OCI-LY7 (cell line): ENCODE measurements at regions of chr22 and their contacts with region 1.

Region 1: DNA sequence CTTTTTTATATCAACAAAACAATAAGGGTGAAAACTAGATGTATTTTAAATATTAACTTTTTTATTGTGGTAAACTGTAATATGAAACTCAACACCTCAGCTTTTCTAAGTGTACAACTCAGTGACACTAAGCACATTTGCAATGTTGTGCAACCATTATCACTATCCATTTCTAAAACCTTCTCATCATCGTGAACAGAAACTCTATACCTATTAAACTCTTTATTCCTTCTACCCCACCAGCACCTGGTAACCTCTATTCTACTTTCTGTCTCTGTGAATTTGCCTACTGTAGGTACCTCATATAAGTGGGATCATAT is 9.4 kb downstream of the HORMAD2 start:
- DNase-seq: no peak
- H3K4me3 ChIP-seq: no peak overlapping the region
- H3K27ac ChIP-seq: no peak overlapping the region
- H3K4me1 ChIP-seq: no peaks in the 10 kb centered on the region
- CTCF ChIP-seq: no peak

Region 2: DNA sequence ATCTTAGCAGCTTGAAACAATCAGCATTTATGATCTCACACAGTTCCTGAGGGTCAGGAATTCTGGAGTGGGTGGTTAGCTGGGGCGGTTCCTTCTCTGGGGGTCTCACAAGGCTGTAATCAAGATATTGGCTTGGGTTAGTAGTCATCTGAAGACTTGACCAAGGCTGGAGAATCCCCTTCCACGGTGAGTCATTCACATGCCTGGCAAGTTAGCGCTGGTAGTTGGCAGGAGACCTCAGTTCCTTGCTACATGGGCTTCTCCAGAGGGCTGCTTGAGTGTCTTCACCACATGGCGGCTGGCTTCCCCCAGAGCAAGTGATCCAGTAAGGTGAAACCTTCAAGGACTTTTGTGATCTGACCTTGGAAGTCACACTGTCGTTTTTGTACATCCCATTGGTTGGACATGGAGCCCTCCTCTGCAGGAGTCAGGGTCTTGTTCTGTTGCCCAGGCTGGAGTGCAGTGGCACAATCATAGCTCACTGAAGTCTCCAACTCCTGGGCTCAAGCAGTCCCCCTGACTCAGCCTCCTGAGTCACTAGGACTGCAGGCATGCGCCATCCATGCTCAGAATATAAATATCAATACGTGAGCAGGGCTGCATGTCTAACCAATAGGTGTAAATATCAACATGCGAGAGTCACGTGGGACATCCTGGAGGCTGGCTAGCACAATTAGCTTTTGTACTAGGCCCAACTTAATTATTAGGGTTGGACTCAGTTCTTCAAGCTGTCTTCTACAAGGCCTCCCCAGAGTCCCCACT is 501.5 kb before region 1 on chr22:
- CTCF ChIA-PET with region 1: no interaction called
- POLR2A ChIA-PET with region 1: no interaction called
- intact Hi-C with region 1: loop called (anchors 2 kb)
- DNase-seq: no peak
- H3K4me3 ChIP-seq: no peak overlapping the region
- H3K27ac ChIP-seq: no peak overlapping the region
- H3K4me1 ChIP-seq: no peaks in the 10 kb centered on the region
- CTCF ChIP-seq: no peak

Region 3: GRCh38 chr22:29635734-29636357 is 453.8 kb before region 1 on chr22:
- CTCF ChIA-PET with region 1: interaction called, 3 read pairs
- POLR2A ChIA-PET with region 1: no interaction called
- intact Hi-C with region 1: loop called (anchors 2 kb)
- DNase-seq: peak; percentile 58
- H3K4me3 ChIP-seq: no peak overlapping the region
- H3K27ac ChIP-seq: no peak overlapping the region
- H3K4me1 ChIP-seq: no peaks in the 10 kb centered on the region
- CTCF ChIP-seq: peak; percentile 92

Region 4: GRCh38 chr22:30062950-30063349 is 26.7 kb before region 1 on chr22:
- CTCF ChIA-PET with region 1: no interaction called
- POLR2A ChIA-PET with region 1: no interaction called
- intact Hi-C with region 1: no loop called
- DNase-seq: no peak
- H3K4me3 ChIP-seq: no peak overlapping the region
- H3K27ac ChIP-seq: no peak overlapping the region
- H3K4me1 ChIP-seq: no peaks in the 10 kb centered on the region
- CTCF ChIP-seq: no peak

Region 5: GRCh38 chr22:30183861-30184278 is 94.3 kb after region 1 on chr22:
- CTCF ChIA-PET with region 1: no interaction called
- POLR2A ChIA-PET with region 1: no interaction called
- intact Hi-C with region 1: no loop called
- DNase-seq: no peak
- H3K4me3 ChIP-seq: no peak overlapping the region
- H3K27ac ChIP-seq: no peak overlapping the region
- H3K4me1 ChIP-seq: no peaks in the 10 kb centered on the region
- CTCF ChIP-seq: no peak